OCI-LY7 (cell line): ENCODE measurements at regions of chr10 and their contacts with region 1.

Region 1: GRCh38 chr10:108612485-108612884 is 1310.8 kb downstream of the XPNPEP1 start:
- DNase-seq: no peak
- H3K4me3 ChIP-seq: no peak overlapping the region
- H3K27ac ChIP-seq: no peak overlapping the region
- H3K4me1 ChIP-seq: no peaks in the 10 kb centered on the region
- CTCF ChIP-seq: no peak

Region 2: GRCh38 chr10:108597031-108597430 is 15.5 kb before region 1 on chr10:
- CTCF ChIA-PET with region 1: no interaction called
- POLR2A ChIA-PET with region 1: no interaction called
- intact Hi-C with region 1: no loop called
- DNase-seq: no peak
- H3K4me3 ChIP-seq: no peak overlapping the region
- H3K27ac ChIP-seq: no peak overlapping the region
- H3K4me1 ChIP-seq: no peaks in the 10 kb centered on the region
- CTCF ChIP-seq: no peak

Region 3: DNA sequence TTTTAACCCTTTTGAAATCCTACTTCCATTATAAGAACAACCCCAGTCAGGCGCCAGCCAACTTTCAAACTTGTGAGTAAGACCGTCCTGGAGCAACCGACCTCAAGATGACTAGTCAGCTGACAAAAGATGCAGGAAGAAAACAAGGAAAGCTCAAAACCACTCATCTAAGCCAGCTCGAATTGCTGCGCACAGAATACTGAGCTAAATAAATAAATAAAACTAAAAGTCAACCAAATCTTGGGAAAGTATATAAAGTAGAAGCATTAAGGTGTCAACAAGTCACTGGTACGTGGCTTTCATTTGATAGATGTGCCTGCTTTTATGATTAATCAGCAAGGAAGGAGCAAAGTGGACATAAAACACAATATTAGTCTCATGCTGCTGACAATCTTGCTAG is 41.0 kb after region 1 on chr10:
- CTCF ChIA-PET with region 1: no interaction called
- POLR2A ChIA-PET with region 1: interaction called, 10 read pairs
- intact Hi-C with region 1: no loop called
- DNase-seq: no peak
- H3K4me3 ChIP-seq: no peak overlapping the region
- H3K27ac ChIP-seq: no peak overlapping the region
- H3K4me1 ChIP-seq: no peaks in the 10 kb centered on the region
- CTCF ChIP-seq: no peak